Right lobe of liver (tissue), 6 donors: ENCODE measurements at regions of chr3 and their contacts with region 1.

Region 1: DNA sequence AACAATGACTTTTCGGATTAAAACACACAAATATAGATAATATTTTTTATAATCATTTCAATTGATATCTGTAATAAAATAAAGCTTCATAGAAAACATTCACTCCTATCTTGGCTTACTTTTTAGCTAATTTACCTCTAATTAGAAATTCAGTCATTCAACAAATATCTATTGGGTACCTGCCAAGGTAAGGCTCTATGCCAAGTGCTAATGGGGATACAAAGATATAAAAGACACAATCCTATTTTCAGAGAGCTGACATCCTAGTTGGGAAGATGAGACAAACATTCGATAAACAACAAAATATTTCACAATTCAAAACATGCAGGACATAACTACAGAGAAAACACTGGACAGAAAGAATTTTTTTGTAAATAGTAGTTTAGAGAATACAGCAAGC is 63.3 kb downstream of the ULK4 start:
- DNase-seq: no peak
- ATAC-seq: no peak
- H3K4me3 ChIP-seq: no peak overlapping the region
- H3K27ac ChIP-seq: no peak overlapping the region
- H3K4me1 ChIP-seq: peaks cover 0 to 14% (median 0%) of the 10 kb centered on the region in 4 donors
- H3K27me3 ChIP-seq: no peaks in the 10 kb centered on the region
- CTCF ChIP-seq: no peak
- POLR2A ChIP-seq: no peak

Region 2: DNA sequence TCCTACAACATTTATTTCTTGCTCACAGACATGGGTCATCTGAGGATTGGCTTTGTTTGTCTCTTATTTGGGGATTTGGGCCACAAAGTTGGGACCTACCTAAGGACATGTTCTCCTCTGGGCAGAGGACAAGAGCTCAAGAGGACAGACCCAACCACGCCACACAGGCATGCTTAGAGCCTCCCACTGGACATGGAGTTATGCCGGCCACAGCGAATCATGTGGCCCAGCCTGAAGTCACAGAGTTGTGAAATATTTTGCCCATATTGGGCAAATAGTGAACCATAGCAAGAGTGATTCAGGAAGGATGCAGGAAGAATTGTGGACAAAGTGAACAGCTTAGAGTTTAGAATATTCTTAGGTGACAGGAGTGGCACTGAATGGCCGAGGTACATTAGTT is 202.4 kb after region 1 on chr3:
- intact Hi-C with region 1: loop called (anchors 5 kb)
- DNase-seq: peak; percentile 71 to 81 (median 78)
- ATAC-seq: peak; percentile 84 to 91 (median 90)
- H3K4me3 ChIP-seq: no peak overlapping the region
- H3K27ac ChIP-seq: peak overlapping the region in 2 of 3 donors; percentile 45 to 54
- H3K4me1 ChIP-seq: peaks cover 0 to 12% (median 4%) of the 10 kb centered on the region in 4 donors
- H3K27me3 ChIP-seq: no peaks in the 10 kb centered on the region
- CTCF ChIP-seq: no peak
- POLR2A ChIP-seq: no peak